ENCODE measurements at regions of chr15 and their contacts with region 1.

Region 1: DNA sequence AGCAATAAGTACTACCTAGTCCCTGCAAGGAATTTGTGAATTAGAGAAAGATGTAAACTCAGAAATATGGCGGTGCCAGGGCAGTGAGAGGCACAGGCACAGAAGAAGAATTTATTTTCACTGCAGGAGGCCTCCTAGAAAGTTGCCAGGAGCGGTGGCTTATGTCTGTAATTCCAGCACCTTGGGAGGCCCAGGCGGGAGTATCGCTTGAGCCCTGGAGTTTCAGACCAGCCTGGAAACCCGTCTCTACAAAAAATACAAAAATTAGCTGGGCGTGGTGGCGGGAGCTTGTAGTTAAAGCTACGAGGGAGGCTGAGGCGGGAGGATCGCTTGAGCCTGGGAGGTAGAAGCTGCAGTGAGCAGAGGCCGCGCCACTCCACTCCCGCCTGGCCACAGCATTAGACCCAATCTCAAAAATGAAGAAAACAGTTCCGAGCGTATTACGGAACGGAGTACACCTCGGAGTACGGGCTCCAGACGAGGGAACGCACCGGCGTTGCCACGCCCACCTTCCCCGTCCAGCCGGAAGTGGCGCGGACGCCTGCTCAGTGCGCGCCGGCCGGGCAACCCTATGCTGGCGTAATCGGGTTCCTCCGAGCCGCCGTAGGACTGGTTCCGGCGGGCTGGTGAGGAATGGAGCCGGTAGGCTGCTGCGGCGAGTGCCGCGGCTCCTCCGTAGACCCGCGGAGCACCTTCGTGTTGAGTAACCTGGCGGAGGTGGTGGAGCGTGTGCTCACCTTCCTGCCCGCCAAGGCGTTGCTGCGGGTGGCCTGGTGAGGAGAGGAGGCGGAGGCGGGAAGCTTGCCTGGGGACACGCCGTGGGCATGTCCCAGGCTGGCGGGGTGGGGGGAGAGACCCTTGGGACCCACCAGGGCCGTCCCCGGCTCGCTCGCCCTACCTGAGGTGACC is at the start of gene FBXO22:
- DNase-seq: peak; percentile 93 to 94
- H3K4me3 ChIP-seq: peak within 1 kb of the TSS; percentile 54 to 86 (median 66)
- H3K27ac ChIP-seq: peak within 1 kb of the TSS; percentile 42 to 68 (median 63)
- H3K4me1 ChIP-seq: peaks cover 0 to 11% of the 10 kb centered on the region in 2 donors
- H3K27me3 ChIP-seq: no peaks in the 10 kb centered on the region
- CTCF ChIP-seq: no peak
- POLR2A ChIP-seq: peak in 1 of 2 donors; percentile 76
- total RNA-seq, gene FBXO22: 21.4 to 31.3 (median 24.2) TPM

Region 2: DNA sequence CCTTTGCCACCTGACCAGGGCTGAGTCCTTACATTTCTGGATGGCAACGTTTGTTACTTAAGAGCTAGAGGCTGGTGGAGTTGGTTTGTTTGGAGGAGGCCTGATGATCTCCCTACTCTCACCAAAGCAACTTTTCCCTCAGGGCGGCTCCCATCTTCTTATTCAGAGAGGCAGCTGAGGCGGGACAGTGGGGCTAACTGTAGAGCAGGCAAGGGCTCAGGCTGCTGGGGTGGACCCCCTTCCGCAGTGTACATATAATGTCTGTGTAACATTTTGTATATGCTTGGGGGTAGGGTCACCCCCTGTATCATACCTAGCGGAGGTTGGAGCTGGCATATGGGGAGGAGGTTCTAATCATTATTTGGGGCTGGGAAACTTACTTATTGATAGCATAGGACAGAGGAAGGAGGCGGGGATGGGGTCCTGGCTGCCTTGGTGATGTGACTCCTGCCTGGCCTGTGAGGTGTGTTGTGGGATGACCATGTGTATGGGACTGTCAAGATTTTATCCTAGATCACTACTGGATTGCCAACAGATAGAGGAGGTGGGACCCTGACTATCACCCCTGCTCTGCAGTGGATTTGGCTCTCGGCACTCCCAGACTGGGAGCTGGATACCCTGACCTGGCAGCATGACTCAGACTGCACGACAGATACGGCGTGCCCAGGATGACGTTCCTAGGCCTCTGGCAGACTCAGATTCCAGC is 112.8 kb before region 1 on chr15:
- intact Hi-C with region 1: no loop called
- DNase-seq: no peak
- H3K4me3 ChIP-seq: no peak overlapping the region
- H3K27ac ChIP-seq: no peak overlapping the region
- H3K4me1 ChIP-seq: no peaks in the 10 kb centered on the region
- H3K27me3 ChIP-seq: no peaks in the 10 kb centered on the region
- CTCF ChIP-seq: no peak
- POLR2A ChIP-seq: no peak

Region 3: DNA sequence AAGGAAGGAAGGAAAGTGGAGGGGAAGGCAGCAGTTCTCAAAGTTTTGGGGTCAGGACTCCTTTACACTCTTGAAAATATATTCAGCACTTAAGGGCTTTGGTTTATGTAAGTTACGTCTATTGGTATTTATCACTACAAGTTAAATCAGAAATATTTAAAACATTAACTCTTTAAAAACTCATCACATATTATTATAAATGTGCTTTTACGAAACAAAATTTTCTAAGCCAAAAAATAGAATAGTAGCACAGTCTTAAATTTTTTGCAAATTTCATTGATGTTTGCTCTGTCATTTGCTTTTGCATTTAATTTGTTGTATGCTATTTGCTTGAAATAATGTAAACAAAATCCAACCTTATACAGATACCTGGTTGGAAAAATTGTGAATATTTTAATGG is 52.9 kb before region 1 on chr15:
- intact Hi-C with region 1: loop called (anchors 5 kb)
- DNase-seq: no peak
- H3K4me3 ChIP-seq: no peak overlapping the region
- H3K27ac ChIP-seq: no peak overlapping the region
- H3K4me1 ChIP-seq: peaks cover 0 to 8% of the 10 kb centered on the region in 2 donors
- H3K27me3 ChIP-seq: no peaks in the 10 kb centered on the region
- CTCF ChIP-seq: no peak
- POLR2A ChIP-seq: no peak

Region 4: GRCh38 chr15:76108021-76108723 is 204.6 kb after region 1 on chr15:
- intact Hi-C with region 1: no loop called
- DNase-seq: peak in 1 of 2 donors; percentile 5
- H3K4me3 ChIP-seq: no peak overlapping the region
- H3K27ac ChIP-seq: no peak overlapping the region
- H3K4me1 ChIP-seq: no peaks in the 10 kb centered on the region
- H3K27me3 ChIP-seq: no peaks in the 10 kb centered on the region
- CTCF ChIP-seq: no peak
- POLR2A ChIP-seq: no peak